ENCODE measurements at regions of chr13 and their contacts with region 1.

Region 1: DNA sequence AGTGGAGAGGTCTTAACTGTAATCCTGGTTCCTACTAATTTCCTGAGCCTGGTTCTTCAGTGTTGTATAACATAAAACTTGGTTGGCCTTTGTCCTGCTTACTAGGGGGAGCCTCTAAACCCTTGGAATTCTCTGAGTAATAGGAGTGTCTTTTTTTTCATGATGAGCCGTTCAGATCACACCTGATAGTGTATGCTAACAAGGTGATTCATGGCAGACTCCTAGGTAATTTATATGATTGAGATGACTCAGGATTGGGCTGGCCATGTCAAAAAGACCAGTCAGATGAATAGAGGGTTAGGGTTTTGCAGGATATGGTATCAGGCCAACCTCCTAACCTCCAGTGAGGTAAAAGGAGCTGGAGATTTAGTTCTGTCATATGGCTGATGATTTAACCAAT is 135.8 kb upstream of the KLF12 start:
- DNase-seq: no peak
- H3K4me3 ChIP-seq: no peak overlapping the region
- H3K27ac ChIP-seq: no peak overlapping the region
- H3K4me1 ChIP-seq: no peaks in the 10 kb centered on the region
- H3K27me3 ChIP-seq: no peaks in the 10 kb centered on the region
- CTCF ChIP-seq: no peak
- POLR2A ChIP-seq: no peak

Region 2: GRCh38 chr13:74168263-74168675 is 101.7 kb before region 1 on chr13:
- CTCF ChIA-PET with region 1: no interaction called
- POLR2A ChIA-PET with region 1: no interaction called
- dilution Hi-C with region 1: no loop called
- intact Hi-C with region 1: no loop called
- DNase-seq: no peak
- H3K4me3 ChIP-seq: no peak overlapping the region
- H3K27ac ChIP-seq: no peak overlapping the region
- H3K4me1 ChIP-seq: no peaks in the 10 kb centered on the region
- H3K27me3 ChIP-seq: no peaks in the 10 kb centered on the region
- CTCF ChIP-seq: no peak
- POLR2A ChIP-seq: no peak

Region 3: DNA sequence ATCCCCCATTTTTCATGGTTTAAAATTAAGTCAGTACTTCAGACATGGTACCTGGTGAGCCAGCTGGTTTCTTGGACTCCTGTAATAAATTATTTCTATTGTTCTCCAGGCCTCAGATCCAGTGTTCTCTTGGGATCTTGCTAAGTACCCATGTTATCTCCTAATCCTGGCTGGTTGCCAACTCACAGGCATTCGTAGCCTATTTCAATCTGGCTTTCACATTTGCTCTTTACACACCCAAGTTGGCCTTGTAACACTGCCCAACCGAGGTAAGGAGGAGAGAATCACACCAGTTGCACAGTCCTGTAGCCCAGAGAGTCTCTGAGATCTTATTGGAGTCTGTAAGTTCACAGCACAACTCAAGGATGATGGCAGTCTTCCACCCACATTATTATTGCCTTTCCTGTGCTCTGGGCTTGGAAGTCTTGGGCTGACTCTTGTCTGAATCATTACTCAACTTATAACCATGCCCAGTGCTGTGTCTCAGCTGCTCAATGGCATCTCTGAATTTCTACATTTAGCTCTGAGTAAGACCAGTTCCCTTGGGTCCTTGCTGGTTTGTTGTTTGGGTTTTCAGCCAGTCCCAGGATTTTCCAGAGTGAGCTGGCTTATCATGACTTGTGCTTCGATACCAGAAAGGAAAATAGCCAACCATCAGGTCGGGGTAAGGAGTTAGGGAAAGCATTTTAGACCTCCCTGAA is 59.2 kb before region 1 on chr13:
- CTCF ChIA-PET with region 1: no interaction called
- POLR2A ChIA-PET with region 1: interaction called, 14 read pairs
- dilution Hi-C with region 1: no loop called
- intact Hi-C with region 1: no loop called
- DNase-seq: peak; percentile 43
- H3K4me3 ChIP-seq: no peak overlapping the region
- H3K27ac ChIP-seq: no peak overlapping the region
- H3K4me1 ChIP-seq: no peaks in the 10 kb centered on the region
- H3K27me3 ChIP-seq: no peaks in the 10 kb centered on the region
- CTCF ChIP-seq: no peak
- POLR2A ChIP-seq: no peak

Region 4: DNA sequence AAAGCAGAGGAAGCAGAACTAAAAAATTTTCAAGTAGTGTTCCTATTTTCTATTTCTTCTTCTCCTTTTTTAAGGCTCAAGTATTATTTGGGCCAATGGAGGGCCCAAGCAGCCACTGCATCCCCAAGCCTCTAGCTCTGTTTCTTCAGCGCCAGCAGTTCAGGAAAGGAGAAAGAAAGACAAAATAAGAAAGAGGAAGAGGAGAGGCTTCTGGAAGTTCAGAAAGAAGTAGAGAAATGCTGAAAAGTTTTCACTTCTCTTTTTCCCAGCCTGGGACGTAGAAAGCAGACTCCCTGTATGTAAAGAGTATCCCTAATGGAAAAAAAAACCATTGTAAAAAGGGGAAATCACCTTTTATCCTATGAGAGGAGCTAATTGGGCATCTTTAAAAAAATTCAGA is 29.7 kb after region 1 on chr13:
- CTCF ChIA-PET with region 1: no interaction called
- POLR2A ChIA-PET with region 1: no interaction called
- dilution Hi-C with region 1: no loop called
- intact Hi-C with region 1: no loop called
- DNase-seq: no peak
- H3K4me3 ChIP-seq: no peak overlapping the region
- H3K27ac ChIP-seq: no peak overlapping the region
- H3K4me1 ChIP-seq: no peaks in the 10 kb centered on the region
- H3K27me3 ChIP-seq: peaks cover 0 to 3% of the 10 kb centered on the region in 2 experiments
- CTCF ChIP-seq: no peak
- POLR2A ChIP-seq: no peak

Measured in endothelial cell of umbilical vein (primary cell).